Right lobe of liver (tissue), 6 donors: ENCODE measurements at regions of chr9 and their contacts with region 1.

Region 1: DNA sequence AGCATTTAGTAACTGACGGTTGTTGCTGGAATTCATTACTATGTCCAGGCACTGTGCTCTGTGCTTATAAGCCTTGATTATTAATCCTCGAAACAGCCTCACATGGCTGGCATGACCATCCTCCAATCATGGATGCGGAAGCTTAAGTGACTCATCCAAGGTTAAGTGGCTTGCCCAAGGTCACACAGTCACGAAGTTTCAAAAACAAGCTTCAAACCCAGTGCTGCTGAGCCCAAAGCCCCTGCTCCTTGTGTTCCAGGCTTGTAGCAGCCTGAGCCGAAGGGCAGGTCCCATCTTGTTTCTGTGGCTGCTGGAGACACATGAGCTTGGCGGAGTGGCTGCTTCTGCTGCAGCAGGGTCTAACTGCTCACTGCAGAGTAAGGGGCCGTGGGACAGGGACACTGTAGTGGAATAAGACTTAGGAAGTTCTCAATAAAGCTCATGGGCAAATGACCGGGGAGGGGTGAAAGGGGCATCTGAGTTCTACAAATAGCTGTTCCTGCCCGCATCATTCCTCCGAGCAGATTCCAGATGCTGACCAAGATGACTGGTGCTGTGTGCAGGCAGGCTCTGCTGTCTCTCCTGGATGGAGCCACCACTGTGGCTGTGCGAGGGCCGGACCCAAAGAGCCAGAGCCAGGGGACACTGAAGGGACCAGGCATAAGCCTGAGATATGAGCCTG is 32.4 kb downstream of the WHRN start:
- DNase-seq: no peak
- ATAC-seq: no peak
- H3K4me3 ChIP-seq: no peak overlapping the region
- H3K27ac ChIP-seq: no peak overlapping the region
- H3K4me1 ChIP-seq: no peaks in the 10 kb centered on the region
- H3K27me3 ChIP-seq: no peaks in the 10 kb centered on the region
- CTCF ChIP-seq: no peak
- POLR2A ChIP-seq: no peak

Region 2: GRCh38 chr9:114413861-114414301 is 59.0 kb before region 1 on chr9:
- intact Hi-C with region 1: loop called in 1 of 2 experiments (anchors 10 kb)
- DNase-seq: no peak
- ATAC-seq: peak in 2 of 4 donors; percentile 49 to 52
- H3K4me3 ChIP-seq: no peak overlapping the region
- H3K27ac ChIP-seq: no peak overlapping the region
- H3K4me1 ChIP-seq: no peaks in the 10 kb centered on the region
- H3K27me3 ChIP-seq: no peaks in the 10 kb centered on the region
- CTCF ChIP-seq: no peak
- POLR2A ChIP-seq: no peak